GM10248 (cell line): ENCODE measurements at regions of chr6 and their contacts with region 1.

Region 1: GRCh38 chr6:20816126-20816525 is 281.9 kb downstream of the CDKAL1 start:
- DNase-seq: no peak
- CTCF ChIP-seq: no peak

Region 2: GRCh38 chr6:20805021-20805420 is 11.1 kb before region 1 on chr6:
- CTCF ChIA-PET with region 1: interaction called, 12 read pairs
- POLR2A ChIA-PET with region 1: no interaction called
- DNase-seq: no peak
- CTCF ChIP-seq: no peak